A549 (cell line): ENCODE measurements at regions of chr16 and their contacts with region 1.

Region 1: GRCh38 chr16:67561824-67562525 is 351 bp upstream of the CTCF start:
- DNase-seq: peak; percentile 80 to 96
- ATAC-seq: peak; percentile 87 to 96
- H3K4me3 ChIP-seq: peak overlapping the region; percentile 87
- H3K27ac ChIP-seq: peak overlapping the region; percentile 99 to 100
- H3K4me1 ChIP-seq: peaks cover 17% of the 10 kb centered on the region
- CTCF ChIP-seq: no peak
- EP300 ChIP-seq: no peak
- POLR2A ChIP-seq: peak; percentile 78
- RAD21 ChIP-seq: no peak

Region 2: DNA sequence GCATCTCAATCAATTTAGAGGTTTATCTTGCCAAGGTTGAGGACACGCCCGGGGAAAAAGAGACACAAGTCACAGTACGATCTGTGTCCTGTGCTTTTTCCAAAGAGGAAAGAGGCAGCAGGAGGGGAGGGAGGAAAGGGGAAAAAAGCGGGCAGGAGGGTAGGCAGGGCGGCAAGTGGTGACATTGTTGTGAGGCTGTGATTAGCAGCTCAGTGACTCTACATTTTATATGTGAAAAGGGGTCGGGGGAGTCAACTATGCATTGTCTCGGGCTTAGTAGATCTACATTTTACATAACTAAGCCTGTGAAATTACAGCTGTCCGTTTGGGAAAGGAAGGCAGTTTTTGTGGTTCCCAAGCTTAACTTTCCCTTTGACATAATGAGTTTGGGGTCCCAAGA is 55.5 kb before region 1 on chr16:
- CTCF ChIA-PET with region 1: no interaction called
- POLR2A ChIA-PET with region 1: no interaction called
- DNase-seq: no peak
- ATAC-seq: no peak
- H3K4me3 ChIP-seq: no peak overlapping the region
- H3K27ac ChIP-seq: no peak overlapping the region
- H3K4me1 ChIP-seq: peaks cover 8% of the 10 kb centered on the region; the same call in 1 of the 3 replicates
- CTCF ChIP-seq: no peak
- EP300 ChIP-seq: no peak
- POLR2A ChIP-seq: no peak
- RAD21 ChIP-seq: no peak

Region 3: DNA sequence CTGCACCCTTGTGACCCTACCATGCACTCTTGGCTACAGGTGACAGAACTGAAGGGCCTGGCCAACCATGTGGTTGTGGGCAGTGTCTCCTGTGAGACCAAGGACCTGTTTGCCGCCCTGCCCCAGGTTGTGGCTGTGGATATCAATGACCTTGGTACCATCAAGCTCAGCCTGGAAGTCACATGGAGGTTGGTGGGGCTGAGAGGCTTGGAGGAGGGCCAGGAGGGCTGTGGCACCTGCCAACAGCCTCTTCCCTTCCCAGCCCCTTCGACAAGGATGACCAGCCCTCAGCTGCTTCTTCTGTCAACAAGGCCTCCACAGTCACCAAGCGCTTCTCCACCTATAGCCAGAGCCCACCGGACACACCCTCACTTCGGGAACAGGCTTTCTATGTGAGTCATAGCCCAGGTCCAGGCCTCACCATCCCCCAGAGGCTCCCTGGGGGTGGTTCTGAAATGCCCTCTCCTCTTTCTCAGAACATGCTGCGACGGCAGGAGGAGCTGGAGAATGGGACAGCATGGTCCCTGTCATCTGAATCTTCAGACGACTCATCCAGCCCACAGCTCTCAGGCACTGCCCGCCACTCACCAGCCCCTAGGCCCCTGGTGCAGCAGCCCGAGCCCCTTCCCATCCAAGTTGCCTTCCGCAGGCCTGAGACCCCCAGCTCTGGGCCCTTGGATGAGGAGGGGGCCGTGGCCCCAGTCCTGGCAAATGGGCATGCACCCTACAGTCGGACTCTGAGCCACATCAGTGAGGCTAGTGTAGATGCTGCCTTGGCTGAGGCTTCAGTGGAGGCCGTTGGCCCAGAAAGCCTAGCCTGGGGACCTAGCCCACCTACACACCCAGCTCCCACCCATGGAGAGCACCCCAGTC is 20.3 kb before region 1 on chr16:
- CTCF ChIA-PET with region 1: interaction called, 80 read pairs
- POLR2A ChIA-PET with region 1: interaction called, 10 read pairs
- DNase-seq: peak; percentile 54 to 58
- ATAC-seq: peak in 1 of 2 experiments; percentile 12; a peak in 3 of 6 replicates
- H3K4me3 ChIP-seq: no peak overlapping the region
- H3K27ac ChIP-seq: no peak overlapping the region
- H3K4me1 ChIP-seq: peaks cover 9% of the 10 kb centered on the region; the same call in 1 of the 3 replicates
- CTCF ChIP-seq: no peak
- EP300 ChIP-seq: no peak
- POLR2A ChIP-seq: no peak
- RAD21 ChIP-seq: no peak

Region 4: GRCh38 chr16:67571981-67572431 is 10.0 kb after region 1 on chr16:
- CTCF ChIA-PET with region 1: interaction called, 36 read pairs
- POLR2A ChIA-PET with region 1: no interaction called
- DNase-seq: no peak
- ATAC-seq: no peak
- H3K4me3 ChIP-seq: no peak overlapping the region
- H3K27ac ChIP-seq: no peak overlapping the region
- H3K4me1 ChIP-seq: peaks cover 9% of the 10 kb centered on the region
- CTCF ChIP-seq: no peak
- EP300 ChIP-seq: no peak
- POLR2A ChIP-seq: no peak
- RAD21 ChIP-seq: no peak

Region 5: DNA sequence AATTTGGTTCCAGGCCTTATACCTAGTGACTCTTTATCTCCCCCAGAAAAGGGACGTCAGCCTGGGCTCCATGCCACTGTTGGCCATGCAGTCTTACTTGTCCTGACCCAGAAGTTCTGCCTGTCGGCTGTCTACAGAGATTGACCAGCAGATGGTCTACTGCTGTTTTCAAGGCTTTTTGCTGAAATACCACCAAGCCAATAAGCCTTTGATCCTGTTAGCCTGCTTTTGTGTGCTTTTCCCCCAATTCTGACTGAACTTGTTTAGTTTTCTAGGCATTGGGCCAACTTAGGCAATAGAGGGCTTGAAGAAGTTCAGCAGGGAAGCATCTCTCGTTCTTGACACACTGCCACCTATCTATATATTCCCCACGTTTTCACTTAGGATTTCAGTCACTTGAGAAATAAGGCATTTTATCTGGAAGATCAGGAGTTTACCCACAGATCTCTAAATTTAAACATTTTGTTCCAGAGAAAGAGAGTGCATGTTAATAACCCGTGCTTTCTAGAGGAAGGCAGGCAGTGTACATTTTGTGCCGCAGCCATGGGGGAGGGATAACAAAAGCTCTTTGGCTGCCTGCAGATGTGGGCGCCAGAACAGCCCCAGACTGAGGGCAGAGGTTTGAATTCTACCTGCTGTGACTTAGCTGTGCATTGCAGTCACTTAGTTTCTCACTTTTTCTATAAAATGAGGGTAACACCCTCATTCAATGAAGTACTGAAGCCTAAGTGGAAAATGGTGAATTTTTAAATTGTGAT is 70.6 kb after region 1 on chr16:
- CTCF ChIA-PET with region 1: interaction called, 32 read pairs
- POLR2A ChIA-PET with region 1: no interaction called
- DNase-seq: no peak
- ATAC-seq: no peak
- H3K4me3 ChIP-seq: no peak overlapping the region
- H3K27ac ChIP-seq: no peak overlapping the region
- H3K4me1 ChIP-seq: no peaks in the 10 kb centered on the region
- CTCF ChIP-seq: no peak
- EP300 ChIP-seq: no peak
- POLR2A ChIP-seq: no peak
- RAD21 ChIP-seq: no peak

Region 6: DNA sequence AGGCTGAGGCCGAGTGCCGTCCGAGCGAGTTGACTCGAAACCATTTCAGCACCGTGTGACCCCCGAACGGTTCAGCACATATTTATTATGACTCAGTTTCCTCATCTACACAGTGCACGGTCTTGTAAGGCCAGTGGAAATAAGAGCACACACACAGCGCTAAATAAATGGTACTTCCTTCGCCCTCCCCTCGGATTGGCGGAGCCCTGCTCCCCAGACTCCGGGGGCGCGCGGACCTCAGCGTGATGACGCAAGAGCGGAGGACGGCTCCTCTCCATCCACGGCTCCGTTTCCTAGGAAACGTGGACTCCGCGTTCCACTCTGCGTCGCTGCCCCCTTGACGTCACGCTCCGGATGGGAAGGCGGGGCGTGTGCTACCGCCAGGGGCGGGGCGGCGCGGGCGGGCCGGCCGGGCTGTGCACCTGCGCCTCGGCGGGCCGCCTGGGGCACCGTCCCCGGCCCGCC is 98.6 kb after region 1 on chr16 and contains the start of gene PARD6A:
- CTCF ChIA-PET with region 1: interaction called, 22 read pairs
- POLR2A ChIA-PET with region 1: interaction called, 17 read pairs
- DNase-seq: peak; percentile 96 to 99
- ATAC-seq: peak; percentile 66 to 81
- H3K4me3 ChIP-seq: peak within 1 kb of the TSS; percentile 91
- H3K27ac ChIP-seq: peak within 1 kb of the TSS; percentile 90 to 92
- H3K4me1 ChIP-seq: peaks cover 8% of the 10 kb centered on the region
- CTCF ChIP-seq: no peak
- EP300 ChIP-seq: no peak
- POLR2A ChIP-seq: no peak
- RAD21 ChIP-seq: no peak
- polyA plus RNA-seq, gene PARD6A: 1.7 and 1.8 TPM in 2 replicates